ENCODE measurements at regions of chr1 and their contacts with region 1.

Region 1: DNA sequence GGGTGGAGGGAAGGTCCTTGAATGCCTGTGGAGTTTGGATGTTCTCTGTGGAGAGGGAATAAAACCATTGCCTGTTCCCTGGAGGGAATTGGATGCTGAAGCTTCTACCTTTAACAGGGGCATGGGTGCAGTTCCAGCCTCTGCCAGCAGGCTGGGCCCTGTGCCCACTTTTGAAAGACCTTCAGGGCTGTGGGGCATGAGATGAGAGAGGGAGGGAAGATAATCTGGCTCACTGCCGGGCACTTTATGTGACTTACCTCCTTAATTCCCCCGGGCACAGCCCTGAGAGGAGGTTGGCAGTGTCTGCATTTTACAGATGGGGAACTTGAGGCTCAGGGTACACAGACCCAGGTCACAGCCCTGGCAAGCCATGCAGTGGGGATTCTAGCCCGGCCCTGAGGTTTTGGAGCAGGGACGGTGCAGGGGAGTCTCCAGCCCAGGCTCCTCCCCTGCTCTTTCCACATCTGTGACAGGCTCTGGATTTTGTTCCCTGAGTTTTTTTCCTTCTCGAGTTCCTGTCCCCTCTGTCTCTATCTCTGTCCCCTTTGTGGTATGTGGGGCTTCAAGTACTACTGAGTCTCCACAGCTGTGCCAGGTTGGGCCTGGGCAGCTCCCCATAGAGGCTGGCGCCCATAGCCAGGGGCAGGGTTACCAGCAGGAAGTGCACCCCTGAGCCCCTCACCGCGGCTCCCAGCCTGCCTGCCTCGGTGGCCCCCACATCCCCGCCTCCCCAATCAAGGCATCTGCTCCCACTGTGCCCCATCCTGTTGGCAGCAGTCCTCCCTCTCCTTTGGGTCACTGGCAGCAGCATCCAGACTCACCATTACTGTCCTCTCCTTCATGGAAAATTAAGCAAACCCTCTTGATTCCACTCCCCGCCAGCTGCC is 14.0 kb upstream of the THEMIS2 start:
- DNase-seq: peak; percentile 64 to 96
- H3K4me3 ChIP-seq: peak overlapping the region in 1 of 4 experiments; percentile 6; a peak in 1 of 8 replicates
- H3K27ac ChIP-seq: no peak overlapping the region
- H3K4me1 ChIP-seq: no peaks in the 10 kb centered on the region; a peak in 1 of 7 replicates
- H3K27me3 ChIP-seq: no peaks in the 10 kb centered on the region
- CTCF ChIP-seq: peak; percentile 89 to 99 (median 97)
- EP300 ChIP-seq: no peak
- POLR2A ChIP-seq: no peak
- RAD21 ChIP-seq: peak; percentile 99 to 100

Region 2: GRCh38 chr1:27906759-27907158 is 48.4 kb after region 1 on chr1:
- CTCF ChIA-PET with region 1: interaction called, 12 read pairs
- POLR2A ChIA-PET with region 1: no interaction called
- DNase-seq: no peak
- H3K4me3 ChIP-seq: no peak overlapping the region
- H3K27ac ChIP-seq: no peak overlapping the region
- H3K4me1 ChIP-seq: no peaks in the 10 kb centered on the region
- H3K27me3 ChIP-seq: no peaks in the 10 kb centered on the region
- CTCF ChIP-seq: no peak
- EP300 ChIP-seq: no peak
- POLR2A ChIP-seq: no peak
- RAD21 ChIP-seq: no peak

Region 3: DNA sequence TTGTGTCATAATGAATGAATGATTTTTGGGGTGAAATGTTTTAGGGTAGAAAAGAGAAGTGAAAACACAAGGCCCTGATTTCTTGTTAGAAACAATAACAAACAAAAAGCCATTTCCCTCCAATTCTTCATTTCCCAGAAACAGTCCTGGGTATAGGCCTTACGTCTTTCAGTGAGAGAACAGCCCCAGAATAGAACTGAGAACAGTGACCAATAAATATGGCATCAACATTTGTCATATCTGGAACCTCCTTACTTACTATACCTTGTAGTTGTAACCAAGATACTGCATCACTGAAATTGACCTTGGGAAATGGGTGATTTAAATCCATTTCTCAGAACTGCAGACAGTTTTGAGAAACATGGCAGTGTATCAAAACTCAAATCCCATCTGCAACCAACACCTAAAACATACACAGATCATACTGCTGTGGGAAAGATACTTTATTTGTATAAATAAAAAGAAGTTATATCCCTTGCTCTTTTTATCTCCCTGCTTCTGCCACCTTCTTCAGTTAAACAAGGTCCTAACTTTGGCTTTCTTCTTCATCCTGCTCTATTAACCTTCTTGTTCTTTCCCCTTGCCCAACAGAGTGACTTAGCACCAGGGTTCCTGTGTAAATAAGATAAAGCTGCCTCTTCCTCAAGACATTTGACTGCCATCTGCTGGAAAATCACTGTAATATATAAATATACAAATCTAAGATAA is 121.0 kb after region 1 on chr1:
- CTCF ChIA-PET with region 1: interaction called, 18 read pairs
- POLR2A ChIA-PET with region 1: no interaction called
- DNase-seq: no peak
- H3K4me3 ChIP-seq: no peak overlapping the region
- H3K27ac ChIP-seq: no peak overlapping the region
- H3K4me1 ChIP-seq: no peaks in the 10 kb centered on the region
- H3K27me3 ChIP-seq: no peaks in the 10 kb centered on the region
- CTCF ChIP-seq: peak in 1 of 3 experiments; percentile 40; a peak in 1 of 4 replicates
- EP300 ChIP-seq: no peak
- POLR2A ChIP-seq: no peak
- RAD21 ChIP-seq: peak; percentile 57 to 67

Measured in H1 (cell line).